ENCODE measurements at regions of chr6 and their contacts with region 1.

Region 1: DNA sequence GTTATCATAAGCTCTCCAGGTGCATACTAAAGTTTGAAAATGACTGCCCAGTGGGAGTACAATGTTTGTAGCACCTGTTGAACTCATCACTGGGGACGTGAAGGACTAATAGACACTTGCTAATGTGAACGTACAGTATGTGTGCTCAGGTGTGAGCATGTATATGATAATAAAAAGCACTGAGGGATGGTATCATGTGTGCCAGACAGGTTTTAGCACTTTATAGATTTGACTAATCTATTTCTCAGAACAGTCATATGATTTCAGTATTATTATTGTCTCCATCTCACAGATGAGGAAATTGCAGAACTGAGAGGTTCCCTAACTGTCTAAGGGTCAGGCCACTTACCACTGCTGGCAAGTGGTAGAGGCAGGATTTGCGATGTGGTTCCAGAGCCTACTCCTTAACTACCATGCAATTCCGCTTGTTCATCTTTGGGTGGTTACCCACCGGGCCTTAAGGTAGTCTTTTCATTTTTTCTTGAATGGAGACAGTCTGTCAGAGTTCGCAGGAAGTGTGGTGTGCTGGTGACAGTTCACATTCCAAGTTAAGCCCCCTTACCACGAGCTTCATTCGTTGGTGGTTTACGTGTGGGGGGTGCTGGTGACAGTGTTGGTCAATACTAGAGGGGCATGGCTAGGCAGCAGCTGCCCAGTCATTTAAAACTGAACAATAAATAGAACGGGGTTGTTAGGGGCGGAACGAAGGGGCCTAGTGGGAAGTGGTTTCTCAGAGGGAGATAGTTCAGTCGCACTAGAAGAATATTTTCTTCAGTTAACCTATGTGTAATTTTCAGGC is 46.8 kb downstream of the RREB1 start:
- DNase-seq: peak; percentile 80
- ATAC-seq: peak; percentile 84
- H3K4me3 ChIP-seq: peak overlapping the region; percentile 58; the same call in 1 of the 2 replicates
- H3K27ac ChIP-seq: peak overlapping the region; percentile 93
- H3K4me1 ChIP-seq: peaks cover 80% of the 10 kb centered on the region
- H3K27me3 ChIP-seq: no peaks in the 10 kb centered on the region
- CTCF ChIP-seq: no peak
- EP300 ChIP-seq: peak; percentile 88 to 92; a peak in 3 of 4 replicates
- POLR2A ChIP-seq: peak; percentile 51; the same call in 1 of the 2 replicates
- RAD21 ChIP-seq: no peak

Region 2: GRCh38 chr6:6793388-6794250 is 360.9 kb before region 1 on chr6:
- CTCF ChIA-PET with region 1: interaction called, 3 read pairs
- POLR2A ChIA-PET with region 1: no interaction called
- RAD21 ChIA-PET with region 1: no interaction called
- SMC1A ChIA-PET with region 1: no interaction called
- in situ Hi-C with region 1: no loop called
- intact Hi-C with region 1: loop called (anchors 10 kb)
- DNase-seq: no peak
- ATAC-seq: no peak
- H3K4me3 ChIP-seq: no peak overlapping the region
- H3K27ac ChIP-seq: no peak overlapping the region
- H3K4me1 ChIP-seq: peaks cover 28% of the 10 kb centered on the region
- H3K27me3 ChIP-seq: no peaks in the 10 kb centered on the region
- CTCF ChIP-seq: no peak
- EP300 ChIP-seq: no peak
- POLR2A ChIP-seq: no peak
- RAD21 ChIP-seq: no peak

Region 3: GRCh38 chr6:7058250-7058923 is 96.2 kb before region 1 on chr6:
- CTCF ChIA-PET with region 1: no interaction called
- POLR2A ChIA-PET with region 1: no interaction called
- RAD21 ChIA-PET with region 1: no interaction called
- SMC1A ChIA-PET with region 1: no interaction called
- in situ Hi-C with region 1: no loop called
- intact Hi-C with region 1: no loop called
- DNase-seq: no peak
- ATAC-seq: peak; percentile 31; the same call in 1 of the 3 replicates
- H3K4me3 ChIP-seq: no peak overlapping the region
- H3K27ac ChIP-seq: no peak overlapping the region
- H3K4me1 ChIP-seq: no peaks in the 10 kb centered on the region
- H3K27me3 ChIP-seq: no peaks in the 10 kb centered on the region
- CTCF ChIP-seq: no peak
- EP300 ChIP-seq: no peak
- POLR2A ChIP-seq: no peak
- RAD21 ChIP-seq: no peak

Region 4: GRCh38 chr6:7112741-7113313 is 41.7 kb before region 1 on chr6:
- CTCF ChIA-PET with region 1: interaction called, 3 read pairs
- POLR2A ChIA-PET with region 1: interaction called, 6 read pairs
- RAD21 ChIA-PET with region 1: interaction called, 30 read pairs
- SMC1A ChIA-PET with region 1: interaction called, 59 read pairs
- in situ Hi-C with region 1: no loop called
- intact Hi-C with region 1: no loop called
- DNase-seq: peak; percentile 41
- ATAC-seq: peak; percentile 55
- H3K4me3 ChIP-seq: peak overlapping the region; percentile 72
- H3K27ac ChIP-seq: peak overlapping the region; percentile 36
- H3K4me1 ChIP-seq: peaks cover 28% of the 10 kb centered on the region
- H3K27me3 ChIP-seq: no peaks in the 10 kb centered on the region
- CTCF ChIP-seq: no peak
- EP300 ChIP-seq: no peak
- POLR2A ChIP-seq: peak; percentile 34; the same call in 1 of the 2 replicates
- RAD21 ChIP-seq: no peak

Region 5: GRCh38 chr6:7135755-7136154 is 18.8 kb before region 1 on chr6:
- CTCF ChIA-PET with region 1: interaction called, 63 read pairs
- POLR2A ChIA-PET with region 1: interaction called, 63 read pairs
- RAD21 ChIA-PET with region 1: interaction called, 87 read pairs
- SMC1A ChIA-PET with region 1: interaction called, 256 read pairs
- in situ Hi-C with region 1: no loop called
- intact Hi-C with region 1: loop called (anchors 1 kb)
- DNase-seq: no peak
- ATAC-seq: peak; percentile 64
- H3K4me3 ChIP-seq: peak overlapping the region; percentile 41
- H3K27ac ChIP-seq: peak overlapping the region; percentile 88
- H3K4me1 ChIP-seq: peaks cover 77% of the 10 kb centered on the region
- H3K27me3 ChIP-seq: no peaks in the 10 kb centered on the region
- CTCF ChIP-seq: no peak
- EP300 ChIP-seq: 0 out of 4 replicates have a peak, but pooled peaks of 1 of the 2 experiments have one; percentile 18
- POLR2A ChIP-seq: no peak
- RAD21 ChIP-seq: no peak